GM13977 (cell line): ENCODE measurements at regions of chr9 and their contacts with region 1.

Region 1: DNA sequence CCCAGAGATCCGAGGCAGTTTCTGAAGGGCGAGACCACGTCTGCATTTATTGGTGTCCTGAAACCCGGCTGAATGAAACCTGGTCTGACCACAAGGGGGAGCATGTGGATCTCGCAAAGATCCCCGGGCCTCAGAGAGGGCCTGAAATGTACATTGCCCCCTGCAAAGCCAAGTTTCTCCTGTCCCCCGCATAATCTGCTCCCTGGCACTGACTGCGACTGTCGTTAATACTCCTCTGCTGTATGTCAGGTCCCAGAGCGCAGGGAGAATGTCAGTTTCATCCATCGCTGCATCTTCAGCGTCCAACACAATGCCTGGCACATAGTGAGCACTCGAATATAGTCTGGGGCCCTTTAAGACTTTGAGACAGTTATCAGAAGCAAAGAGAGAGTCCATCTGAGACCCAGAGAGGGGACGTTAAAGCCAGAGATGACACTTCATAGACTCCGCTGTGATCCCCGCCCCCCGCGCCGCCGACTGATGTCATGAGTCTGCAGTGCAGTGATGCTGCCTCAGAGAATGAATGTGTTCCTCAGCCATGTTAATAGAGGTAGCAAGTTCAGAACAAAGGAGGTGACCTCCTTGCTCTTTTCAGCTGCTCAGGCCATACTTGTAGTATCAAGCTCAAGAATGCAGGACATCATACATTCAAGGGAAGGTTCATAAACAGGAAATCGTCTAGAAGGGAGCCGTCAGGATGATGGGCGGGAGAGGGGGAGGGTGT is 74.5 kb upstream of the BARHL1 start:
- DNase-seq: peak; percentile 92
- CTCF ChIP-seq: peak; percentile 80

Region 2: GRCh38 chr9:132798817-132799790 is 291.2 kb after region 1 on chr9:
- in situ Hi-C with region 1: loop called (anchors 25 kb)
- DNase-seq: no peak
- CTCF ChIP-seq: peak; percentile 20